GM12878 (cell line): ENCODE measurements at regions of chr19 and their contacts with region 1.

Region 1: DNA sequence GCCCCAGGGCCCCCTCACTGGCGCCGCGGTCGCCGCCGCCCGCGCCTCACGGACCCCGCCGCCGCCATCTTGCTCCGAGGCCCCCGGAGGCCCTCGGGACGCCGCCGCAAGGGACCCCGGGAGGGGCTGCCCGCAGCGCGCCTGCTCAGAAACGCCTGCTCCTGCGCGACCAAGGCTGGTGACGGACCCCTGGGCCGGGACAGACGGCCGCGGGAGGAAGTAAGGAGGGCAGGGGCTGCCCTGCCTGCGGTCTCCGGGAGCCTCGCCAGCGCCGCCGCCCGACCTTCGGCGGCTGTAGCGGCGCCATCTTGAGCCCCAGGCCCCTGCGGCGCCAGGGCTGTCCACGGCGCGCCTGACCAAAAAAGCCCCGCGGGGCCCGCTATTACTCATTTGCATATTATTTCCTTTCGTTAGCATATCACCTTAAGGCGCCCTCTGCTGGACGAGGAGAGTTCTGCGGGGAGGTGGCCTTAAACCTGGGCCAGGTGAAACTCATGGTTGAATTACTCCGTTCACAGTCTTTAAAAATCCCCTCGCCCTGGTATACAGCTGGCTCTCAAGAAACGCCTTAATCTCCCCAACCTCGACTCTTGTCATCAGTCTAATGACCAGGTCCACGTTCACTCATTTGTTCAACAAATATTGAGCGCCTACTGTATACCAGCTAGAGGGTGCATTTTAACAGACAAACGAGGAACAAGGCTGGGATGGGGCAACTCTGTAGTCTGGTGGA is at the start of gene REXO1:
- DNase-seq: peak; percentile 72
- ATAC-seq: peak; percentile 81
- H3K4me3 ChIP-seq: peak within 1 kb of the TSS; percentile 89
- H3K27ac ChIP-seq: peak within 1 kb of the TSS; percentile 100
- H3K4me1 ChIP-seq: peaks cover 29% of the 10 kb centered on the region
- H3K27me3 ChIP-seq: no peaks in the 10 kb centered on the region
- CTCF ChIP-seq: peak; percentile 82 to 94 (median 84)
- EP300 ChIP-seq: no peak
- POLR2A ChIP-seq: peak; percentile 88
- RAD21 ChIP-seq: no peak
- polyA plus RNA-seq, gene REXO1: 0.03 to 0.64 TPM

Region 2: GRCh38 chr19:1774999-1775772 is 73.4 kb before region 1 on chr19:
- CTCF ChIA-PET with region 1: no interaction called
- POLR2A ChIA-PET with region 1: no interaction called
- RAD21 ChIA-PET with region 1: no interaction called
- SMC1A ChIA-PET with region 1: no interaction called
- in situ Hi-C with region 1: no loop called
- intact Hi-C with region 1: no loop called
- DNase-seq: no peak
- ATAC-seq: peak; percentile 82
- H3K4me3 ChIP-seq: no peak overlapping the region
- H3K27ac ChIP-seq: no peak overlapping the region
- H3K4me1 ChIP-seq: no peaks in the 10 kb centered on the region
- H3K27me3 ChIP-seq: peaks cover 6 to 10% of the 10 kb centered on the region in 2 experiments
- CTCF ChIP-seq: peak; percentile 29 to 45 (median 36); a peak in 5 of 6 replicates
- EP300 ChIP-seq: no peak
- POLR2A ChIP-seq: no peak
- RAD21 ChIP-seq: 0 out of 2 replicates have a peak, but pooled peaks have one; percentile 2

Region 3: GRCh38 chr19:1837625-1838105 is 10.9 kb before region 1 on chr19:
- CTCF ChIA-PET with region 1: interaction called, 11 read pairs
- POLR2A ChIA-PET with region 1: interaction called, 3 read pairs
- RAD21 ChIA-PET with region 1: no interaction called
- SMC1A ChIA-PET with region 1: interaction called, 3 read pairs
- in situ Hi-C with region 1: no loop called
- intact Hi-C with region 1: no loop called
- DNase-seq: no peak
- ATAC-seq: peak; percentile 87
- H3K4me3 ChIP-seq: no peak overlapping the region
- H3K27ac ChIP-seq: no peak overlapping the region
- H3K4me1 ChIP-seq: no peaks in the 10 kb centered on the region
- H3K27me3 ChIP-seq: no peaks in the 10 kb centered on the region
- CTCF ChIP-seq: peak; percentile 82 to 98 (median 96)
- EP300 ChIP-seq: no peak
- POLR2A ChIP-seq: no peak; the same call in 1 of the 2 replicates
- RAD21 ChIP-seq: peak; percentile 52